Endothelial cell of umbilical vein (primary cell): ENCODE measurements at regions of chr4 and their contacts with region 1.

Region 1: GRCh38 chr4:177047070-177047850 is 254.5 kb upstream of the VEGFC start:
- DNase-seq: peak; percentile 76
- H3K4me3 ChIP-seq: no peak overlapping the region
- H3K27ac ChIP-seq: no peak overlapping the region
- H3K4me1 ChIP-seq: peaks cover 3% of the 10 kb centered on the region
- H3K27me3 ChIP-seq: no peaks in the 10 kb centered on the region
- CTCF ChIP-seq: peak; percentile 77 to 90
- POLR2A ChIP-seq: no peak

Region 2: GRCh38 chr4:176569301-176569700 is 478.0 kb before region 1 on chr4:
- CTCF ChIA-PET with region 1: interaction called, 35 read pairs
- POLR2A ChIA-PET with region 1: no interaction called
- dilution Hi-C with region 1: no loop called
- intact Hi-C with region 1: loop called (anchors 5 kb)
- DNase-seq: peak; percentile 15
- H3K4me3 ChIP-seq: no peak overlapping the region
- H3K27ac ChIP-seq: no peak overlapping the region
- H3K4me1 ChIP-seq: peaks cover 3% of the 10 kb centered on the region
- H3K27me3 ChIP-seq: peaks cover 2 to 7% of the 10 kb centered on the region in 2 experiments
- CTCF ChIP-seq: no peak
- POLR2A ChIP-seq: no peak

Region 3: GRCh38 chr4:176769519-176769918 is 277.7 kb before region 1 on chr4:
- CTCF ChIA-PET with region 1: interaction called, 26 read pairs
- POLR2A ChIA-PET with region 1: no interaction called
- dilution Hi-C with region 1: no loop called
- intact Hi-C with region 1: no loop called
- DNase-seq: peak; percentile 77
- H3K4me3 ChIP-seq: no peak overlapping the region
- H3K27ac ChIP-seq: peak overlapping the region; percentile 73
- H3K4me1 ChIP-seq: peaks cover 14% of the 10 kb centered on the region
- H3K27me3 ChIP-seq: no peaks in the 10 kb centered on the region
- CTCF ChIP-seq: no peak
- POLR2A ChIP-seq: no peak

Region 4: DNA sequence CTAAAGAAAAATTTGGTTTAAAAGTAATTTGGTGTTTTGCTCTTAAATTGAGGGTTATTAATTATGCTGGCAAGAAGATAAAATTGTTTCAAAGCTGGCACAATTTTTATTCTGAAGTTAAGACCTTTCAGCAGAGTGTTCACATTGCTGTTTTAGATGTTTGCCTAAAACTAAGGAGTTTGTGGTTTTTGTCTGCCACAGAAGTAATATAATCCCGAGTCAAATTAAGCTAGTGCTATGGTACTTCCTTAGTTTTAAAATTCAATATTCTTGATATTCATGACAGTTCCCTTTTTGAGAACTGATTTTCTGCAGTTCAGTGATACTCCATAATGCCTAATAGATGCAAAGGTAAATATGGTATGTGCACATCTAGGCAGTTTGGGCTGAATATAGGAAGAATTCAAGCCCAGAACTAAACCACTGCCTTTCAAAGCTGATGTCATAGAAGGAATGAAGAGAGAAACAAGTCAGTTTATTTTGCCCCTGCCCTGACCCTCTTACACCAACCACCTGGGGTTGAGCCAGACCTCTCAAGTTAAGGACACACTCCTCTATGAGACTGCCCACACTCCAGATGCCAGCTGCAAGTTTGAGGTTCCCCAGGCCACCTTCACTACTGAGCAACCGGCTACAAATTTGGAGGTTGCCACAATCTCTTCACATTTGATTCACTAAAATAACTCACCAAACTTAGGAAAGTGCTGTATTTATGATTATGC is 222.5 kb before region 1 on chr4:
- CTCF ChIA-PET with region 1: interaction called, 31 read pairs
- POLR2A ChIA-PET with region 1: no interaction called
- dilution Hi-C with region 1: no loop called
- intact Hi-C with region 1: no loop called
- DNase-seq: no peak
- H3K4me3 ChIP-seq: no peak overlapping the region
- H3K27ac ChIP-seq: no peak overlapping the region
- H3K4me1 ChIP-seq: peaks cover 3% of the 10 kb centered on the region
- H3K27me3 ChIP-seq: no peaks in the 10 kb centered on the region
- CTCF ChIP-seq: no peak
- POLR2A ChIP-seq: no peak

Region 5: GRCh38 chr4:176902710-176903323 is 144.4 kb before region 1 on chr4:
- CTCF ChIA-PET with region 1: interaction called, 25 read pairs
- POLR2A ChIA-PET with region 1: no interaction called
- dilution Hi-C with region 1: no loop called
- intact Hi-C with region 1: no loop called
- DNase-seq: peak; percentile 57
- H3K4me3 ChIP-seq: no peak overlapping the region
- H3K27ac ChIP-seq: peak overlapping the region; percentile 55
- H3K4me1 ChIP-seq: peaks cover 15% of the 10 kb centered on the region
- H3K27me3 ChIP-seq: no peaks in the 10 kb centered on the region
- CTCF ChIP-seq: no peak
- POLR2A ChIP-seq: no peak

Region 6: DNA sequence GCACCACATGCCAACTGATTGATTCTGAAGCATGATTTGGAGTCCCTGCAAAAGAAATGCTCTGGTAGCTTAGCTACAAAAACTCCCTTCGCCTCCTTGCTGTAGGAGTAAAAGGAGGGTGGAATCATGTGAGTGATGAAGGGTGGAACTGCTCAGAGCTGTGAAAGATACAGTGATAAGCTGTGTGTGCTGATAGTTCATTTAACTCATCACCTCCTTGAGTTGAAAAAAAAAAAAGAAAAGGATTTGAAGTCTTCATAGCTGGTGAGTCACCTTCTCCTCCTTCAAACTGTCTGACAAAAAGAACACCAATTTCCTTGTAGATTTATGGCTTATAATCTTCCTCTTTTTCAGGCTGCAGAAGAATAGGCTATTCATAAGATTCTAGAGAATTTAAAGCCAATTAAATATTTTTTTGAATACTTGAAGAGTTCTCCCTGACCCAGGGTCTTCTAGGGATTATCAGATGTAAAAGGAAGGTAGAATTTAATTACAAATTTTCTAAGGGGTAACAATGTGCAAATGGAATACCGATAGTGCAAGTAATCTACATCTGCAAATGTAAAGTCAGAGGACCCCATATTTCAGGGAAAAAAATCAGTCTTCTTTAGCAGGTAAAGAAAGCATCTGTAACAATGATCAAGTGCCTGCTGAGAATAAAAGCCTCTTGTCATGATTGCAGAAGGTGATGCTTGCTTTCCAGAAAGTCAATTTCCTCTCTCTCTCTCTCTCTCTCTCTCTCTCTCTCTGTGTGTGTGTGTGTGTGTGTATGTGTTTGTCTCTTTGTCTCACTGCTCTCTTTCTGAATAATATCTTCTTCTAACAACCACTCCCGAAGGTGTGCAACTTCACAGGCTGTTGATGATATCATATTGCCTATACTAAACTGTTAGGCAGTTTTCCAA is 45.7 kb before region 1 on chr4:
- CTCF ChIA-PET with region 1: interaction called, 10 read pairs
- POLR2A ChIA-PET with region 1: no interaction called
- dilution Hi-C with region 1: no loop called
- intact Hi-C with region 1: no loop called
- DNase-seq: no peak
- H3K4me3 ChIP-seq: no peak overlapping the region
- H3K27ac ChIP-seq: no peak overlapping the region
- H3K4me1 ChIP-seq: peaks cover 24% of the 10 kb centered on the region
- H3K27me3 ChIP-seq: no peaks in the 10 kb centered on the region
- CTCF ChIP-seq: no peak
- POLR2A ChIP-seq: no peak

Region 7: DNA sequence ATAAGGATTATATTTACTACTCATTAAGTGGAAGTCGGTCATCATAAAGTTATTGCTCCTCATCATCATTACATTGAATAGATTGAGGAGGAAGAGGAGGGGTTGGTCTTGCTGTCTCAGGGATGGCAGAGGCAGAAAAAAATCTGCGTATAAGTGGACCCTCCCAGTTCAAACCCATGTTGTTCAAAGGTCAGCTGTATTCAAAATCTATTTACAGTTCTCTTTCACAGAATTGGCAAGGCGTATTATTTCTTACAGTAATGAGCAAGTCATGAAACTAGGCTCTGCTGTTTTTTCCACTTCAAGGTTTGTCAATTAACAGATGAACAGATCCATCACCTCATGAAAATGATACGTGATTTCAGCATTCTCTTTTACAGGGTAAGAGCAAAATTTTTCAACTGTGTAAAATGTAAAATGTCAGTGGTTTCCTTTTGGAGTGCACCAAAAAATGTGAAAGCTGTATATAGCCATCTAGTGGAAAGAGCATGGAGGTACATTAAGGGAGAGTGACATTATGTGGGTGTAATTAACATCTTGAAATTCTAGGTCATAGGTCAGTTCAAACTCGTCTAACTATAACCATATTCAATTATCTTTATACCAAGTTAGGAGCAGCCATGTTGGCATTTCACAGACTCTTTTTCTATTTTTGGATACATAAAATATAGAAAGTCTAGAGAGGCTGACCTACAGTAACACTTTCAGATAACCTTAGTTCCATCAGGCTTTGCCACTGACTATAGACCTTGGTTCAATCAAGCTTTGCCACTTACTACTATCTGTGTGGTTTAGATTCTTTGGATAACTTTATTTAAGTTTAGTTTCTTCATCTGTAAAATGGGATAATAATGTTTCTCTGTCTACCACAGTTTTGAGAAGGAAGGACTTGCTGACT is 292.5 kb after region 1 on chr4:
- CTCF ChIA-PET with region 1: interaction called, 11 read pairs
- POLR2A ChIA-PET with region 1: no interaction called
- dilution Hi-C with region 1: no loop called
- intact Hi-C with region 1: loop called (anchors 1 kb)
- DNase-seq: peak; percentile 57
- H3K4me3 ChIP-seq: no peak overlapping the region
- H3K27ac ChIP-seq: no peak overlapping the region
- H3K4me1 ChIP-seq: no peaks in the 10 kb centered on the region
- H3K27me3 ChIP-seq: no peaks in the 10 kb centered on the region
- CTCF ChIP-seq: peak; percentile 38 to 51
- POLR2A ChIP-seq: no peak

Region 8: GRCh38 chr4:177632481-177632880 is 585.2 kb after region 1 on chr4:
- CTCF ChIA-PET with region 1: no interaction called
- POLR2A ChIA-PET with region 1: no interaction called
- dilution Hi-C with region 1: no loop called
- intact Hi-C with region 1: no loop called
- DNase-seq: no peak
- H3K4me3 ChIP-seq: no peak overlapping the region
- H3K27ac ChIP-seq: no peak overlapping the region
- H3K4me1 ChIP-seq: no peaks in the 10 kb centered on the region
- H3K27me3 ChIP-seq: no peaks in the 10 kb centered on the region
- CTCF ChIP-seq: no peak
- POLR2A ChIP-seq: no peak